ENCODE measurements at regions of chr13 and their contacts with region 1.

Region 1: DNA sequence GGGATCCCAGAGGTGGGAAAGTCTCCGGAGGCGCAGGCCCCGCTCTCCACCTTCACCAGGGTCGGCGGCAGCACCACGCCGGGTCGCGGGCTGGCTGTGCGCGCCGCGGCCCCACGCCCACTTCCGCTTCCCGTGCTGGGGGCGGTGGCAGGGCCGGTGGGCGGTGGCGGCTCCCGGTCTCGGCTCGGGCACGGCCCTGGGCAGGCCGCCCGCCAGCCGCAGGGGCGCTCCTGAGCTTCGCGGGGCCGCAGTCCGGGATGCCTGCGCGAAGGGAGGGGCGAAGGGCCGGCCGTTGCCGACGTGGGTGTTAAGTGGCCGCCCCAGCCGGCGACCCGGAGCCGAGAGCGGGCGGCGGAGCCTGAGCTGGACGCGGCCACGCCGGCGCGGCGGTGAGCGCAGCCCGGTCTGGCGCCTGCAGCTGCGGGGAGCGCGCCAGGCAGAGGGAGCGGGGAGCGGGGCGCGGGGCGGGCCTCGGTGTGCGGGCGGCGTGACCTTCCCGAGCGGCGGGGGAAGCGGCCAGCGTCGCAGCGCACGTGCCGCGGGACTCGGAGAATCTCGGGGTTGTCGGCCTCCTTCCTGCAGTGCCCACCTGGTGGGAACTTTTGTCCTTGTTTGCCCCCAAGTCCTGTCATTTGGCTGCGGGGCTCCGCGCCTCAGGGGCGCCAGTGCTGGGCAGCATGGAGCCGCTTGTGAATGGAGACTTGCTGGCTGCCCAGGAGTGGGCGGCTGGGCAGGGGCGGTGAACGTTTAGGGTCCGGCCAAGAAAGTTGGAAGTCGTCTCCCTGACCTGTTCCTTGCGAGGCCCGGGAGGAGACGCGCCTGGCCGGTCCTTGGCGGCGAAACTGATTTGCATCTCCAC is at the start of gene SLC25A15:
- DNase-seq: peak; percentile 95
- H3K4me3 ChIP-seq: peak within 1 kb of the TSS; percentile 48 to 83 (median 59)
- H3K27ac ChIP-seq: peak within 1 kb of the TSS; percentile 73 to 88 (median 79)
- H3K4me1 ChIP-seq: peaks cover 0 to 24% (median 15%) of the 10 kb centered on the region in 6 donors
- H3K27me3 ChIP-seq: no peaks in the 10 kb centered on the region
- CTCF ChIP-seq: peak in 5 of 11 experiments; percentile 44 to 54 (median 50)
- POLR2A ChIP-seq: peak in 1 of 3 donors; percentile 40
- total RNA-seq, gene SLC25A15: 2.9 to 6.2 (median 4.4) TPM

Region 2: DNA sequence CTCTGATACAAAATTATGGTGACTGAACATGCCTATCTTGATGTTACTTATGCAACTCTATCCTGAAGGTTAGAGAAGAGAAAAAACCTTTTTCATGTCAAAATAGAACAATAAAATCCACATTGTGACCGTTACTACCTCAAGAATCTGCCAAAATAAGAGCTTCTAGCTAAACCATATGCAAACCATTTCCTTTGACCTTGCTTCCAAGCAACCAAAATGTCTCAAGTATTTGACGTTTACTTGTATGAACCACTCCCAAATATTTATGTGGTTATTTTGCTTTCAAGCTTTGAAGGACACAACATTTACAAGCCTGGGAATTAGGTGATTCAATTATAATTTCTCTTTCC is 136.9 kb before region 1 on chr13:
- intact Hi-C with region 1: no loop called
- DNase-seq: no peak
- H3K4me3 ChIP-seq: peak overlapping the region in 3 of 8 donors; percentile 2 to 51 (median 5)
- H3K27ac ChIP-seq: peak overlapping the region in 7 of 8 donors; percentile 6 to 79 (median 35)
- H3K4me1 ChIP-seq: peaks cover 58 to 100% (median 91%) of the 10 kb centered on the region in 6 donors
- H3K27me3 ChIP-seq: no peaks in the 10 kb centered on the region
- CTCF ChIP-seq: no peak
- POLR2A ChIP-seq: no peak

Region 3: DNA sequence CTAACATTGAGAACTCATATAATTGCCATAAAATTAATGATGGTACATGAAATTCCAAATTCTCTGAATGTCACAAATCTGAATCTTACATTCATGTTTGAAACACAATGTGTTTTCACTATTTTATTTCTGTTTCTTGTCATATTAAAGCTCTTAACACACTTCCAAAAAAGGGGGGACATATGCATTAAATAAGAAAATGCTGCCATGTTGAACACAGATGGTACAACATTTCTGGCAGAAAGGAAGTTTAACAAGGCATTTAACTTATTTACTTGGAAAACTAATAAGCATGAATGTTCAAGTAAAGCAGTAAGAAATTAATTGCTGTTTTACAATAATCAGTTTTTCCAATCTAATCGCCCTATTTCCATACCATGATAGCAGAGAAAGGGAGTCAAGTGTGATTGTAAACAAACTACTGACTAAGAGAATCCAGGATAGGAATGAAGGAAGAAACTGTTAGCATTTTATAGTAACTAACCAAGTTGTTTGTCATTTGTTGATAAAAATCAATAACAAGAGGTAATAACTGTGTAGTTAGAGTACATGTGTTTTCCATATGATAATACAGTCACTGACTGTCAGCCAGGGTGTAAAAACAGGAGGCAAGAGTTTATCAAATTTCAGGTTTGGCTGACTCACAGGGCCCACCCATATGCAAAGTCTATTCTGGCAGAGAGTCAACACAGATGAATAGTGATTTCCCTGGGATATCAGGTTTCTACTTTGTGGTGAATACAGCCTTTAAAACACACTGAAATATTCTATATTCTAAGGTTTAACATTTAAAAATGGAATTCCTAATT is 117.3 kb before region 1 on chr13:
- intact Hi-C with region 1: no loop called
- DNase-seq: no peak
- H3K4me3 ChIP-seq: no peak overlapping the region
- H3K27ac ChIP-seq: no peak overlapping the region
- H3K4me1 ChIP-seq: peaks cover 6 to 22% (median 15%) of the 10 kb centered on the region in 6 donors
- H3K27me3 ChIP-seq: no peaks in the 10 kb centered on the region
- CTCF ChIP-seq: no peak
- POLR2A ChIP-seq: no peak

Region 4: GRCh38 chr13:40819797-40820315 is 30.4 kb after region 1 on chr13:
- intact Hi-C with region 1: no loop called
- DNase-seq: no peak
- H3K4me3 ChIP-seq: no peak overlapping the region
- H3K27ac ChIP-seq: no peak overlapping the region
- H3K4me1 ChIP-seq: no peaks in the 10 kb centered on the region
- H3K27me3 ChIP-seq: no peaks in the 10 kb centered on the region
- CTCF ChIP-seq: no peak
- POLR2A ChIP-seq: no peak

Region 5: DNA sequence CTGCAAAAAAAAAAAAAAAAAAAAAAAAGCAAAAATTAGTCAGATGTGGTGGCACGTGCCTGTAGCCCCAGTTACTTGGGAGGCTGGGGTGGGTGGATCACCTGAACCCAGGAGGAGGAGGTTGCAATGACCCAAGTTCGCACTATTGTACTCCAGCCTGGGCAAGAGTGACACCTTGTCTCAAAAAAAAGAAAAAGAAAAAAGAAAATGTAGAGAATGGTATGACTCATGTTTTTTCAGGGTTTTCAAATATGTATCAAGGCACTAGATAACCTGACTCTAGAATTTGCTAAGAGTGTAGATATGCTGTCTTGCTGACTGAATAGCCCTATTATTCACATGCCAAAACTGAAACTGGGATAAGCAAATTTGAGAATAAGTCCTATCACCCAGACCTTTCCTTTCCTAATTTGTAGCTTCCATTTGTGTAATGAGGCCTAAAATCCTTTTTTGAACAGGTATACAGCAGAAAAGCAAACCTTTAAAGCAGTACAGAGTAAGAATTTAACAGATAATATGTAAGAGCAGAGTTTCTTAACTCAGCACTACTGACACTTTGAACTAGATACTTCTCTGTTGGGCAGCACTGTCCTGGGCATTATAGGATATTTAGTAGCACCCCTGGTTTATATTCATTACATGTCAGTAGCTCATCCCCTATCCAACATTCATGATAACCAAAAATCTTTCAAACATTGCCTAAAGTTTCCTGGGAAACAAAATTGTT is 121.0 kb after region 1 on chr13:
- intact Hi-C with region 1: loop called (anchors 10 kb)
- DNase-seq: no peak
- H3K4me3 ChIP-seq: no peak overlapping the region
- H3K27ac ChIP-seq: no peak overlapping the region
- H3K4me1 ChIP-seq: peaks cover 0 to 12% (median 3%) of the 10 kb centered on the region in 6 donors
- H3K27me3 ChIP-seq: no peaks in the 10 kb centered on the region
- CTCF ChIP-seq: no peak
- POLR2A ChIP-seq: no peak